ENCODE measurements at regions of chr2 and their contacts with region 1.

Region 1: GRCh38 chr2:70871398-70872211 is 36.0 kb upstream of the CD207 start:
- DNase-seq: peak; percentile 87
- H3K4me3 Mint-ChIP-seq: no peak overlapping the region
- H3K27ac Mint-ChIP-seq: no peak overlapping the region
- H3K4me1 Mint-ChIP-seq: no peaks in the 10 kb centered on the region
- H3K27me3 Mint-ChIP-seq: peaks cover 40% of the 10 kb centered on the region

Region 2: GRCh38 chr2:70789304-70790135 is 82.1 kb before region 1 on chr2:
- CTCF ChIA-PET with region 1: interaction called, 37 read pairs
- POLR2A ChIA-PET with region 1: no interaction called
- intact Hi-C with region 1: no loop called
- DNase-seq: peak; percentile 82
- H3K4me3 Mint-ChIP-seq: peak overlapping the region; percentile 49
- H3K27ac Mint-ChIP-seq: no peak overlapping the region
- H3K4me1 Mint-ChIP-seq: peaks cover 11% of the 10 kb centered on the region
- H3K27me3 Mint-ChIP-seq: peaks cover 52% of the 10 kb centered on the region

Region 3: DNA sequence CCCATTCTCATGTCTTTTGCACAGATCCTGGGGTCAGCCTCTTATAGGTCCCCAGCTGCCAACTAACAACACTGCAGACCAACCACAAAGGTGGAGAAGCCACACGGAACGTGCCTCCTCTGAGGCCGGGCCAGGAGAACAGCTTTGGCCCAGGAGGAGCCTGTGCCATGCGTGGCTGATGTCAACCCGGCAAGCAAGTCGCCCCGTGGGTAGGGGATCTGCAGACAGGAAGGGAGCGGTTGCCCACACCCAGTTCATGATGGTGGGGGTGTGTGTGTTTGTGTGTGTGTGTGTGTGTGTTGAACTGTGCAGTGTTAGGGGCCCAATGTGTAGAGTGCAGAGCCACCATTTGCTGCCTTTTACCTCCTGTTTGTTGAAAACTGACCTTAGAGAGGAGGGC is 48.8 kb before region 1 on chr2:
- CTCF ChIA-PET with region 1: no interaction called
- POLR2A ChIA-PET with region 1: no interaction called
- intact Hi-C with region 1: no loop called
- DNase-seq: no peak
- H3K4me3 Mint-ChIP-seq: no peak overlapping the region
- H3K27ac Mint-ChIP-seq: no peak overlapping the region
- H3K4me1 Mint-ChIP-seq: peaks cover 6% of the 10 kb centered on the region
- H3K27me3 Mint-ChIP-seq: peaks cover 8% of the 10 kb centered on the region

Region 4: DNA sequence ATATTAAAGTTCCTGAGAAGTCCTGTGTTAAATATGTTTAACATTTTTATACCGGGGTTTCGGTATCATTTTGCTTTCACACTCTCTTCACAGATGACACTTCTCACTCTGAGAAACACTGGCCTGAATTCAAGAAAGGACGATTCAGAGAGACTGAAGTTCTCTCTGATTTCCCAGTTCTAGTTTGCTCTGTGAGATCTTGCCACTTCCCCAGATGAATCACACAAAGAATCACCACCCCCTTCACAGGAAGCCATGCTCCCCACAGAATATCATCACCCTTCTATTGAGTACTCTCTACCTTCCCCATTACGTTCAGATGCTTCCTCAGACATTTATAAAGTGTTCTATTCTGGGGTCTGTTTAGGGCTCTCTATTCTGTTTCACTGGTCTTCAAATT is 19.9 kb before region 1 on chr2:
- CTCF ChIA-PET with region 1: interaction called, 12 read pairs
- POLR2A ChIA-PET with region 1: no interaction called
- intact Hi-C with region 1: no loop called
- DNase-seq: peak; percentile 57
- H3K4me3 Mint-ChIP-seq: peak overlapping the region; percentile 1
- H3K27ac Mint-ChIP-seq: peak overlapping the region; percentile 60
- H3K4me1 Mint-ChIP-seq: peaks cover 21% of the 10 kb centered on the region
- H3K27me3 Mint-ChIP-seq: peaks cover 2% of the 10 kb centered on the region

Region 5: DNA sequence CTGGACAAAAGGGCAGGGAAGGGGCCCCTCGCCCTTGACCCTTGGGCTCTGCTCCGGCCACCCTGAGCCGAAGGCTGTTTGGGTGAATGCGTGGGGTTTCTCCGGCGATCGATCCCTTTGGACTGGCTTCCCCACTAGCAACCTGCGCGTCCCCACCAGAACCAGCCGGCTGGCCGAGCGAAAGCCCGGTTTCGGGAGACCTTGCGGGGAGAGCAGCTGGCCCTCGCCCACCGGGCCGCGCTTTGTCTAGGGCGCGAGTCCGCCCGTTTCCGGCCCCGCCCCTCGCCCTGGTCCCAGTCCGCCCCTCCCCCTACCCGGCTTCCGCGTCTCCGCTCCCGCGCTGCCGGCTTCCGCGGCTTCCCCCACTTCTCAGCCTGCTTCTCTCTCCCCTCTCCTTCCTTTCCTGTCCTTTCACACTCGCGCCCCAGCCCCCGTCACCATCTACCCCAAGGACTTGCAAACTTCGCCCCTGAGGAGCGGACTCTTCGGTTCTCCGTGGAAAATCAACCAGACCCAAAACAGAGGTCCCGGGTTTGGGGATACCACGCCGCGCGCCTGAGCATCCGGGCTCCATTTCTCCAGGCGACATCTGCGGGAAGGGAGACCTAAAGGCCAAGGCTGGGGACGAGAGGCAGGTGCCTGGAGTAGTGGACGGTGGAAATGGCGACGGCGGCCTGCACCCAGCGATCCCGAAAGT is 16.1 kb after region 1 on chr2:
- CTCF ChIA-PET with region 1: interaction called, 24 read pairs
- POLR2A ChIA-PET with region 1: no interaction called
- intact Hi-C with region 1: no loop called
- DNase-seq: peak; percentile 62
- H3K4me3 Mint-ChIP-seq: peak overlapping the region; percentile 57
- H3K27ac Mint-ChIP-seq: no peak overlapping the region
- H3K4me1 Mint-ChIP-seq: peaks cover 26% of the 10 kb centered on the region
- H3K27me3 Mint-ChIP-seq: peaks cover 80% of the 10 kb centered on the region

Region 6: DNA sequence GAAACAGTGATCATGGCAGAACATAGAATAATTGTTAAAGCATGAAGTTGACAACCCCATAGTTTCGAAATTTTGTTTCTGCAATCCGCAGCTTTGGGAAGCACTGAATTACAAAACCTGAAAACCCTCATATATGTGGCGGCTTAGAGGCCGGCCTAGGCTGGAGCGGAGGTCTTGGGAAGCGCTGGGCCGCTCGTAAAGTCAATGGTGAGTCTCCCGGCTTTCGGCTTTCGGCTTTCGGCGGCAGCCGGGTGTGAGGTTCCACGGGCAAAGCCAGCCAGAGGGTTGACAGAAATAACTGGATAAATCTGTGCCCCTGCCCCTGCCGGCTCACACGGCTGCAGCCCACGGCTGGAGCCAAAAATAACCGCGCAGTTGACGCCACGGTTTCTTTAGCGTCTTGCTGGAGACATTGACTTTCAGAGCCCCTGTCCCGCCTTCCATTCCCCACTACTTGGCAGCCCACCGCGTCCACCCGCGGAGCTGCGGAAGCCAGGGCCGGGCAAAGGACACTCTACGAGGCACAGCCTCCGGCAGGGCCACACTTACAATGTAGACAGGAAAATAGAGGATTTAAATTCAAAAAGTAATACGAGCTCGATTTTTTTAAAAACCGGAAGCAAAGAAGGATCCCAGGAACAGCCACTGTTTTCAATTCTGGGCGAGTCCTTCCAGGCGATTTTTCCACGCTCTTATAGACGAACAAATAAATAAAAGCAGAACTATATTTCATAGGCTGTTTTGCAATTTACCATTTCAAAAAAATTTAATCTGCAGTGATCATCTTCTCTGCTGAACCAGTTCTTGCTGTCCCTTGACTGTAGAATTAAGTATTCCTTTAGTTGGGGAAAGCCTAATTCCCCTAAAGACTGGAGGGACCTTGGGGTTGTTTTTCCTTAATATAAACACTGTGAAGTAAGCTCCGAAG is 35.8 kb after region 1 on chr2:
- CTCF ChIA-PET with region 1: interaction called, 13 read pairs
- POLR2A ChIA-PET with region 1: no interaction called
- intact Hi-C with region 1: no loop called
- DNase-seq: no peak
- H3K4me3 Mint-ChIP-seq: peak overlapping the region; percentile 25
- H3K27ac Mint-ChIP-seq: no peak overlapping the region
- H3K4me1 Mint-ChIP-seq: peaks cover 9% of the 10 kb centered on the region
- H3K27me3 Mint-ChIP-seq: peaks cover 64% of the 10 kb centered on the region

Region 7: GRCh38 chr2:70919672-70920366 is 48.2 kb after region 1 on chr2:
- CTCF ChIA-PET with region 1: interaction called, 185 read pairs
- POLR2A ChIA-PET with region 1: no interaction called
- intact Hi-C with region 1: loop called (anchors 1 kb)
- DNase-seq: peak; percentile 83
- H3K4me3 Mint-ChIP-seq: no peak overlapping the region
- H3K27ac Mint-ChIP-seq: no peak overlapping the region
- H3K4me1 Mint-ChIP-seq: no peaks in the 10 kb centered on the region
- H3K27me3 Mint-ChIP-seq: peaks cover 14% of the 10 kb centered on the region

Measured in activated CD4-positive, alpha-beta memory T cell treated with anti-CD3 and anti-CD28 coated beads for 36 hours (primary cell).